ENCODE measurements at regions of chr7 and their contacts with region 1.

Region 1: GRCh38 chr7:87059525-87060287 is at the start of gene ELAPOR2:
- DNase-seq: peak; percentile 81 to 83 (median 82)
- H3K4me3 ChIP-seq: peak within 1 kb of the TSS; percentile 59 to 70
- H3K4me3 Mint-ChIP-seq: peak within 1 kb of the TSS; percentile 83 to 91 (median 88)
- H3K27ac ChIP-seq: peak within 1 kb of the TSS; percentile 53
- H3K27ac Mint-ChIP-seq: peak within 1 kb of the TSS; percentile 45 to 93 (median 86)
- H3K4me1 ChIP-seq: peaks cover 14% of the 10 kb centered on the region
- H3K4me1 Mint-ChIP-seq: peaks cover 12 to 20% (median 15%) of the 10 kb centered on the region in 4 donors
- H3K27me3 ChIP-seq: no peaks in the 10 kb centered on the region
- H3K27me3 Mint-ChIP-seq: peaks cover 0 to 3% of the 10 kb centered on the region in 2 donors
- total RNA-seq, gene ELAPOR2: 8.8 to 11.8 TPM

Region 2: DNA sequence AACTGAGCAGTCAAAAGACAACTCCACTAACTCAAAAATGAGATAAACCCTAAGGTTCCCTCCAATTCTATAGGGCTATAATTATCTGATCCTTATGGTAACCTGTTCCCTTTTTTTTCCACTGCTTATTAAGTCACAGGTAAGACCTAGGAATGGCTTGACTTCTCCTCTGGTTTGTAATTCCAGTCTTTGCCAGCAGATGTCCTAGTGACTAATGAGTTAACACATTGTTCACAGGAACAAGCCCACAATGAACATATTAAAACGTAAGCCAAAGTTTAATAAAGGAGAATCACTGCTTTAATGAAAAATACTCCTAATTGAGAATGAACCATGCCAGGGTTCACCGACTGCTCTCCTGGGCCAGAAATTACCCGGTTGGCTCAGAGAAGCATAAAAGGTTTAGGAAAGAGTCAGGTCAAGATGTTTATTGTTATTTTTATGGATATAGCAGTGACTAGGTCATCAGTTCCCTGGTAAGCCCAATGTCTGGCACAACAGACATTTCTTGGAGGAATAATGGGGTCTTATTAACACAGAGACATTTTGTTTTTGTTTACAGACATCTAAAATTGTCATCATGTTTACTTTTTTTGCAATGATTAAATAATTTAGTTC is 120.4 kb before region 1 on chr7:
- CTCF ChIA-PET with region 1: interaction called, 3 read pairs
- POLR2A ChIA-PET with region 1: no interaction called
- intact Hi-C with region 1: loop called (anchors 2 kb)
- DNase-seq: peak; percentile 40 to 62 (median 52)
- H3K4me3 ChIP-seq: no peak overlapping the region
- H3K4me3 Mint-ChIP-seq: no peak overlapping the region
- H3K27ac ChIP-seq: no peak overlapping the region
- H3K27ac Mint-ChIP-seq: peak overlapping the region in 2 of 7 donors; percentile 75 to 85
- H3K4me1 ChIP-seq: no peaks in the 10 kb centered on the region
- H3K4me1 Mint-ChIP-seq: peaks cover 0 to 4% (median 3%) of the 10 kb centered on the region in 4 donors
- H3K27me3 ChIP-seq: no peaks in the 10 kb centered on the region
- H3K27me3 Mint-ChIP-seq: peaks cover 0 to 2% of the 10 kb centered on the region in 2 donors

Region 3: DNA sequence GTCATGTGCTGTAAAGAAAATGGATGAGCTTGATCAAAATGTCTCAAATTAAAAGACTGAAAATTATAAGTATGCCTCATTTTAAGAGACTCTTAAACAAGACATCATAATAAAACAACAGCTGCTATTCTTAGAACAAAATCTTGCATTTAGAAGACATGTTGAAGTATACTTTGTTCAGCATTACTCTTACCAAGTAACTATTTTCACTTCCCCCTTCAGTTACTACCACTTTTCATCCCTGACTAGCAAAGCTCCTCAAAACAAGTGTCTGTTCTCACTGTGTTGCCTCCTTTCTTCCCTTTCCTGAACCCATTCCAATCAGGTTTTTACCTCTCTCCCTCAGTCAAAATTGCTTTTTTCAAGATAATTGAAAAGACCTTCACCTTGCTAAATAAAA is 31.8 kb before region 1 on chr7:
- CTCF ChIA-PET with region 1: no interaction called
- POLR2A ChIA-PET with region 1: no interaction called
- intact Hi-C with region 1: no loop called
- DNase-seq: no peak
- H3K4me3 ChIP-seq: no peak overlapping the region
- H3K4me3 Mint-ChIP-seq: no peak overlapping the region
- H3K27ac ChIP-seq: no peak overlapping the region
- H3K27ac Mint-ChIP-seq: no peak overlapping the region
- H3K4me1 ChIP-seq: no peaks in the 10 kb centered on the region
- H3K4me1 Mint-ChIP-seq: no peaks in the 10 kb centered on the region
- H3K27me3 ChIP-seq: no peaks in the 10 kb centered on the region
- H3K27me3 Mint-ChIP-seq: peaks cover 0 to 3% of the 10 kb centered on the region in 2 donors

Region 4: GRCh38 chr7:87038993-87039716 is 20.6 kb before region 1 on chr7:
- CTCF ChIA-PET with region 1: no interaction called
- POLR2A ChIA-PET with region 1: interaction called, 15 read pairs
- intact Hi-C with region 1: no loop called
- DNase-seq: no peak
- H3K4me3 ChIP-seq: no peak overlapping the region
- H3K4me3 Mint-ChIP-seq: peak overlapping the region in 7 of 8 donors; percentile 19 to 82 (median 80)
- H3K27ac ChIP-seq: no peak overlapping the region
- H3K27ac Mint-ChIP-seq: peak overlapping the region in 5 of 7 donors; percentile 1 to 92 (median 49)
- H3K4me1 ChIP-seq: no peaks in the 10 kb centered on the region
- H3K4me1 Mint-ChIP-seq: peaks cover 0 to 9% (median 0%) of the 10 kb centered on the region in 4 donors
- H3K27me3 ChIP-seq: no peaks in the 10 kb centered on the region
- H3K27me3 Mint-ChIP-seq: peaks cover 0 to 1% of the 10 kb centered on the region in 2 donors

Measured in CD4-positive, alpha-beta memory T cell (primary cell).